ENCODE measurements at regions of chr2 and their contacts with region 1.

Region 1: DNA sequence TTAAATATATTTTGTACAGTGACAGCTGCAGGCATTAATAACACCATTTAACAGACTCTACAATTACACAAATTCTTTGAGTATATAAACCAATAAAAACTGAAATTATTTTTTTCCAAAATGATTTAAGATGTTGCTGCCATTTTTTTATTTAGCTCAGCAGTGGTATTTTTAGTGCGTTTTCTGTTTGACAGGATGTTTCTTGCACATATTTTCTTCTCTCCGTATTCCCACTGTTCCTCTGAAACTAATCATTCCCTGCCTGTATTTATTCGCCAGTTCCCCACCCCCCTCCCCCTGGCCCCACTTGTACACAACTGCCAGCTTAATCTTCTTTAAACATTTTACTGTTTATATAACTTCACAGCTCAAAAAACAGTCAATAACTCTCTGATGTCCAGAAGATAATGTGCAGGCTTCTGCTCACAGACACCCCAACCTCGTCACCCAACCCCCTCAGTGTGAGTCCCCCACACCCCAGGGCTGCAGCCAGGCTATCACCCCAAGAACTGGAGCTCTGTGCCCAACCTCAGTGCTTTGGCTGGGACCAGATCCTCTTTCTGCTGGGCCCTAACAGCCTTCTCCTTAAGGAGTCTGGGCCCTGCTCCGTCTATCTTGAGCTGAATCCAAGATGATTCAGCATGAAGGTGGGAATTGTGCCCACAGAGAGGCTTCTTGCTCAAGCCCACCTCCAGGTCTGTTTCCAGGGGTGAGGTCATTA is 41.6 kb upstream of the MAP4K4 start:
- DNase-seq: no peak
- H3K4me3 Mint-ChIP-seq: no peak overlapping the region
- H3K27ac Mint-ChIP-seq: no peak overlapping the region
- H3K4me1 Mint-ChIP-seq: peaks cover 21% of the 10 kb centered on the region
- H3K27me3 Mint-ChIP-seq: no peaks in the 10 kb centered on the region

Region 2: GRCh38 chr2:101623031-101623521 is 32.8 kb before region 1 on chr2:
- intact Hi-C with region 1: loop called (anchors 2 kb)
- DNase-seq: peak; percentile 59
- H3K4me3 Mint-ChIP-seq: peak overlapping the region; percentile 23
- H3K27ac Mint-ChIP-seq: peak overlapping the region; percentile 17
- H3K4me1 Mint-ChIP-seq: peaks cover 22% of the 10 kb centered on the region
- H3K27me3 Mint-ChIP-seq: no peaks in the 10 kb centered on the region

Region 3: GRCh38 chr2:101697124-101698013 is 41.5 kb after region 1 on chr2 and contains the start of gene MAP4K4:
- intact Hi-C with region 1: loop called (anchors 2 kb)
- DNase-seq: peak; percentile 91
- H3K4me3 Mint-ChIP-seq: peak within 1 kb of the TSS; percentile 85
- H3K27ac Mint-ChIP-seq: peak within 1 kb of the TSS; percentile 88
- H3K4me1 Mint-ChIP-seq: peaks cover 22% of the 10 kb centered on the region
- H3K27me3 Mint-ChIP-seq: no peaks in the 10 kb centered on the region
- total RNA-seq, gene MAP4K4: 41.2 and 42.6 TPM in 2 replicates

Region 4: DNA sequence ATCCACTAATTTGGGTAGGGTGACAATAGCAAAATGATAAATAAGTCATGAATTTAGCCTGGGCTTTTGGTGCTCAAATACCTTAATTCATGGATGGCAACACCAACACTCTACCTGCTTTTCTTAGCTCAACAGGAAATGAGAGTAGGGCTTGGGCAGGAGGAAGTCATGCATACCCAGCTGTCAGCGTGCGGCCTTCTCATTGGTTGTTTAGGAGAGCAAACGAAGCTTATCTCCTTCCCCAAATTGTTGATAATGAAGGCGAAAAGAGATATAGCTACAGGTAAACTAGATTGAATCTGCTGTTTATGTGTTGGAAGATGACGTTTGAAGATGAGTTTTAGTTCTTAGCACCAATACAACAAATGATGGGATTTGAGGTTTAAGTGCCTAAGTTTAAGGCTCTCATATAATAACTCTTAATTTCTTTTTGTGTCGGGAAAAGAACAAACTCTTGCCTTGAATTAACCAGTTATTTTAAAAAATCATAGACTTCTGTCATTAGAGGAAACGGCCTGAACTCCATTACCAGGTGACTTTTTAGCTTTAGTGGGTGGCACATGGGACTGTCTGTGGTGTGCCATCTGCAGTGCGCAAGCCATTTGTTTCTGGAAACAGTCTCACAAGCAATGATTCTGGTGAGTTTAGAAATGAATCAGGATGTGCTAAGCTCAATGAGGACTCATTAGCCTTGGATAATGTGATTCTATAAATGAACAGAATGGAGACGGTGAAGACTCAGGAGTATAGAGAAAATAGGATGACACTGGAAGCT is 61.4 kb after region 1 on chr2:
- intact Hi-C with region 1: loop called (anchors 1 kb)
- DNase-seq: peak; percentile 81
- H3K4me3 Mint-ChIP-seq: peak overlapping the region; percentile 31
- H3K27ac Mint-ChIP-seq: peak overlapping the region; percentile 90
- H3K4me1 Mint-ChIP-seq: peaks cover 58% of the 10 kb centered on the region
- H3K27me3 Mint-ChIP-seq: no peaks in the 10 kb centered on the region

Region 5: GRCh38 chr2:102235491-102235890 is 579.6 kb after region 1 on chr2:
- intact Hi-C with region 1: no loop called
- DNase-seq: peak; percentile 77
- H3K4me3 Mint-ChIP-seq: no peak overlapping the region
- H3K27ac Mint-ChIP-seq: no peak overlapping the region
- H3K4me1 Mint-ChIP-seq: peaks cover 36% of the 10 kb centered on the region
- H3K27me3 Mint-ChIP-seq: no peaks in the 10 kb centered on the region